ENCODE measurements at regions of chr13 and their contacts with region 1.

Region 1: GRCh38 chr13:19695829-19696228 is 62.4 kb downstream of the MPHOSPH8 start:
- DNase-seq: no peak
- ATAC-seq: no peak
- H3K4me3 ChIP-seq: no peak overlapping the region
- H3K27ac ChIP-seq: no peak overlapping the region
- H3K4me1 ChIP-seq: peaks cover 13 to 20% of the 10 kb centered on the region in 2 experiments
- H3K27me3 ChIP-seq: no peaks in the 10 kb centered on the region
- CTCF ChIP-seq: no peak
- POLR2A ChIP-seq: no peak
- RAD21 ChIP-seq: no peak

Region 2: GRCh38 chr13:19645000-19645399 is 50.8 kb before region 1 on chr13:
- CTCF ChIA-PET with region 1: no interaction called
- POLR2A ChIA-PET with region 1: no interaction called
- RAD21 ChIA-PET with region 1: no interaction called
- intact Hi-C with region 1: loop called (anchors 5 kb)
- DNase-seq: no peak
- ATAC-seq: no peak
- H3K4me3 ChIP-seq: no peak overlapping the region
- H3K27ac ChIP-seq: no peak overlapping the region
- H3K4me1 ChIP-seq: no peaks in the 10 kb centered on the region
- H3K27me3 ChIP-seq: no peaks in the 10 kb centered on the region
- CTCF ChIP-seq: no peak
- POLR2A ChIP-seq: no peak
- RAD21 ChIP-seq: no peak

Region 3: GRCh38 chr13:19810996-19811891 is 115.4 kb after region 1 on chr13:
- CTCF ChIA-PET with region 1: no interaction called
- POLR2A ChIA-PET with region 1: no interaction called
- RAD21 ChIA-PET with region 1: no interaction called
- intact Hi-C with region 1: no loop called
- DNase-seq: no peak
- ATAC-seq: no peak
- H3K4me3 ChIP-seq: no peak overlapping the region
- H3K27ac ChIP-seq: no peak overlapping the region
- H3K4me1 ChIP-seq: peaks cover 27 to 32% of the 10 kb centered on the region in 2 experiments
- H3K27me3 ChIP-seq: no peaks in the 10 kb centered on the region
- CTCF ChIP-seq: no peak
- POLR2A ChIP-seq: no peak
- RAD21 ChIP-seq: no peak

Region 4: GRCh38 chr13:19834704-19835103 is 138.9 kb after region 1 on chr13:
- CTCF ChIA-PET with region 1: no interaction called
- POLR2A ChIA-PET with region 1: no interaction called
- RAD21 ChIA-PET with region 1: no interaction called
- intact Hi-C with region 1: no loop called
- DNase-seq: no peak
- ATAC-seq: no peak
- H3K4me3 ChIP-seq: no peak overlapping the region
- H3K27ac ChIP-seq: no peak overlapping the region
- H3K4me1 ChIP-seq: no peaks in the 10 kb centered on the region
- H3K27me3 ChIP-seq: no peaks in the 10 kb centered on the region
- CTCF ChIP-seq: no peak
- POLR2A ChIP-seq: no peak
- RAD21 ChIP-seq: no peak

Measured in HCT116 (cell line).